ENCODE measurements at regions of chr5 and their contacts with region 1.

Region 1: GRCh38 chr5:39714036-39714698 is 289.4 kb upstream of the DAB2 start:
- DNase-seq: peak; percentile 79
- H3K4me3 Mint-ChIP-seq: no peak overlapping the region
- H3K27ac Mint-ChIP-seq: no peak overlapping the region
- H3K4me1 Mint-ChIP-seq: peaks cover 23% of the 10 kb centered on the region
- H3K27me3 Mint-ChIP-seq: no peaks in the 10 kb centered on the region
- CTCF ChIP-seq: peak; percentile 62

Region 2: DNA sequence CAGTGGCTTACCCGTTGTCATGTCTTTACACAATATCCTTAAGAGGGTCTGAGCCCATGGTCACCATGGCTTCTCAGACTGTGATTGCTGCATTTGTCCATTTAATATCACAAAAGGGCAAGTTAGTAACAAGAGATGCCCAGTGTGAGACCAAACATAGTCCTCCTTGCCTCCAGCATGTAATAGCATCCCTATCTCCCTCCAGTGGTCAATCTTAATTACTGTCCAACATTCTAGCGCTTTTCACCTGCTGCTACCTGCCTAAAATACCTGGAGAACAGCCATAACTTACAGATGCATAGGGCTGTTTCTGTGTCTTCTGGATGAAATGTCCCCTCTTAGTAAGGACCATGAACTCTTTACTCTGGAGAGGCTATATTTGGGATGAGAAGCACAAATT is 22.2 kb before region 1 on chr5:
- CTCF ChIA-PET with region 1: interaction called, 10 read pairs
- POLR2A ChIA-PET with region 1: no interaction called
- intact Hi-C with region 1: no loop called
- DNase-seq: peak; percentile 35
- H3K4me3 Mint-ChIP-seq: no peak overlapping the region
- H3K27ac Mint-ChIP-seq: no peak overlapping the region
- H3K4me1 Mint-ChIP-seq: no peaks in the 10 kb centered on the region
- H3K27me3 Mint-ChIP-seq: no peaks in the 10 kb centered on the region
- CTCF ChIP-seq: peak; percentile 23

Region 3: DNA sequence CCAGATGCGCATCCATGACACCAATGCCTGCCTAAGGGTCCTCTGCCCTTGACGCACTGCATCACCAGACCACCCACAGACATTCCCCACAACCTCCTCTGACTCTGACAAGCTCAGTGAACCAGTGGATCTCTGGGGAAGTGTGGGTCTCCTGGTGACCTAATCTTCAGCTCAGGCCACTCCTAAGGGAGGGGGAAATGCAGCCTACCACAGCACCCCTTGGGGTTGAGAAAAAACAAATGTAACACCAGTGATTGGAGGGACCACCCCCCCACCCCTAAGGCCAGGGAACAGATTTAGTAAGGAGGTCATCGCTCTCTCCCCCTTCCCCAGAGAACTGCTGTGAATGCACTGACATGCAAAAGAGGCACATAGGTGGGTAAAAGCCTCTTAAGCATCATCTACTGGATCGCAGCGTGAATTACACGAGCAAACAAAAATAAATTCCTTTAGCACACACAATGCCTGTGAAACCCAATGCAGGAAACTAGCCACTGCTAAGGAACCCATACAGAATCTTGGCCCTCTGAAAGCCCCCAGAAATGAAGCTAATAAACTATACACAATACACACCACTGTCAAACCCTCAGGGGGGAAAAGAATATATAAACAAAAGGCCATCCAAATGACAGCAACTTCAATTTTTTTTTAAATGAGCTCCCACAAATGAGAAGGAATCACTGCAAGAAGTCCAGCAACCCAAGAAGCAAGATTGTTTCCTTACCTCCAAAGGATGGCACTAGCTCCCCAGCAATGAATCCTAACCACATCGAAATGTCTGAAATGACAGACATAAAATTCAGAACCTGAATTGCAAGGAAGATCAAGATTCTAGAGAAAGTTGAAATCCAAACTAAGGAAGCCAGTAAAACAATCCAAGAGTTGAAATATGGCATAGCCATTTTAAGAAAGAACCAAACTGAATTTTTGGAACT is 451.9 kb after region 1 on chr5:
- CTCF ChIA-PET with region 1: interaction called, 6 read pairs
- POLR2A ChIA-PET with region 1: no interaction called
- intact Hi-C with region 1: loop called (anchors 10 kb)
- DNase-seq: peak; percentile 14
- H3K4me3 Mint-ChIP-seq: no peak overlapping the region
- H3K27ac Mint-ChIP-seq: no peak overlapping the region
- H3K4me1 Mint-ChIP-seq: peaks cover 10% of the 10 kb centered on the region
- H3K27me3 Mint-ChIP-seq: no peaks in the 10 kb centered on the region
- CTCF ChIP-seq: peak; percentile 16

Region 4: GRCh38 chr5:40507095-40507494 is 792.9 kb after region 1 on chr5:
- CTCF ChIA-PET with region 1: no interaction called
- POLR2A ChIA-PET with region 1: no interaction called
- intact Hi-C with region 1: loop called (anchors 5 kb)
- DNase-seq: no peak
- H3K4me3 Mint-ChIP-seq: no peak overlapping the region
- H3K27ac Mint-ChIP-seq: no peak overlapping the region
- H3K4me1 Mint-ChIP-seq: no peaks in the 10 kb centered on the region
- H3K27me3 Mint-ChIP-seq: no peaks in the 10 kb centered on the region
- CTCF ChIP-seq: no peak

Region 5: GRCh38 chr5:40700116-40700782 is 986.1 kb after region 1 on chr5:
- CTCF ChIA-PET with region 1: interaction called, 25 read pairs
- POLR2A ChIA-PET with region 1: no interaction called
- intact Hi-C with region 1: no loop called
- DNase-seq: no peak
- H3K4me3 Mint-ChIP-seq: no peak overlapping the region
- H3K27ac Mint-ChIP-seq: no peak overlapping the region
- H3K4me1 Mint-ChIP-seq: no peaks in the 10 kb centered on the region
- H3K27me3 Mint-ChIP-seq: no peaks in the 10 kb centered on the region
- CTCF ChIP-seq: no peak